HEK293 (cell line): ENCODE measurements at regions of chr15 and their contacts with region 1.

Region 1: GRCh38 chr15:74036271-74037170 is 42.0 kb downstream of the PML start:
- H3K4me3 ChIP-seq: no peak overlapping the region
- H3K27ac ChIP-seq: no peak overlapping the region
- H3K4me1 ChIP-seq: no peaks in the 10 kb centered on the region; the same call in 1 of the 2 replicates
- CTCF ChIP-seq: no peak; the same call in 1 of the 2 replicates

Region 2: GRCh38 chr15:73950831-73951561 is 85.5 kb before region 1 on chr15:
- CTCF ChIA-PET with region 1: interaction called, 15 read pairs
- POLR2A ChIA-PET with region 1: no interaction called
- H3K4me3 ChIP-seq: no peak overlapping the region
- H3K27ac ChIP-seq: no peak overlapping the region; the same call in 1 of the 2 replicates
- H3K4me1 ChIP-seq: peaks cover 6% of the 10 kb centered on the region; the same call in 1 of the 2 replicates
- CTCF ChIP-seq: peak; percentile 93

Region 3: GRCh38 chr15:73964736-73965093 is 71.8 kb before region 1 on chr15:
- CTCF ChIA-PET with region 1: interaction called, 248 read pairs
- POLR2A ChIA-PET with region 1: no interaction called
- H3K4me3 ChIP-seq: no peak overlapping the region
- H3K27ac ChIP-seq: no peak overlapping the region
- H3K4me1 ChIP-seq: peaks cover 3% of the 10 kb centered on the region; the same call in 1 of the 2 replicates
- CTCF ChIP-seq: peak; percentile 98

Region 4: GRCh38 chr15:73982222-73982962 is 54.1 kb before region 1 on chr15:
- CTCF ChIA-PET with region 1: interaction called, 14 read pairs
- POLR2A ChIA-PET with region 1: interaction called, 3 read pairs
- H3K4me3 ChIP-seq: no peak overlapping the region
- H3K27ac ChIP-seq: peak overlapping the region; percentile 24; the same call in 1 of the 2 replicates
- H3K4me1 ChIP-seq: peaks cover 12% of the 10 kb centered on the region
- CTCF ChIP-seq: no peak

Region 5: GRCh38 chr15:73991726-73992593 is 44.6 kb before region 1 on chr15 and contains the start of gene STOML1:
- CTCF ChIA-PET with region 1: interaction called, 23 read pairs
- POLR2A ChIA-PET with region 1: interaction called, 8 read pairs
- H3K4me3 ChIP-seq: peak within 1 kb of the TSS; percentile 66
- H3K27ac ChIP-seq: no peak within 1 kb of the TSS
- H3K4me1 ChIP-seq: peaks cover 9% of the 10 kb centered on the region; the same call in 1 of the 2 replicates
- CTCF ChIP-seq: peak; percentile 93

Region 6: GRCh38 chr15:74011610-74012009 is 24.9 kb before region 1 on chr15:
- CTCF ChIA-PET with region 1: interaction called, 11 read pairs
- POLR2A ChIA-PET with region 1: no interaction called
- H3K4me3 ChIP-seq: no peak overlapping the region
- H3K27ac ChIP-seq: no peak overlapping the region
- H3K4me1 ChIP-seq: no peaks in the 10 kb centered on the region
- CTCF ChIP-seq: no peak

Region 7: GRCh38 chr15:74053941-74054529 is 17.5 kb after region 1 on chr15:
- CTCF ChIA-PET with region 1: interaction called, 152 read pairs
- POLR2A ChIA-PET with region 1: no interaction called
- H3K4me3 ChIP-seq: no peak overlapping the region
- H3K27ac ChIP-seq: no peak overlapping the region
- H3K4me1 ChIP-seq: no peaks in the 10 kb centered on the region
- CTCF ChIP-seq: no peak